Kidney (tissue), 22 donors: ENCODE measurements at regions of chr9 and their contacts with region 1.

Region 1: GRCh38 chr9:70484210-70485130 is 70.0 kb upstream of the KLF9 start:
- DNase-seq: peak in 2 of 5 donors; percentile 51 to 70
- H3K4me3 ChIP-seq: no peak overlapping the region
- H3K27ac ChIP-seq: peak overlapping the region; percentile 63 to 83
- H3K4me1 ChIP-seq: peaks cover 2 to 57% (median 33%) of the 10 kb centered on the region in 3 donors
- H3K27me3 ChIP-seq: no peaks in the 10 kb centered on the region
- CTCF ChIP-seq: peak; percentile 80

Region 2: GRCh38 chr9:70419546-70420266 is 64.8 kb before region 1 on chr9:
- intact Hi-C with region 1: loop called (anchors 5 kb)
- DNase-seq: peak; percentile 88 to 99 (median 91)
- H3K4me3 ChIP-seq: peak overlapping the region; percentile 62 to 73 (median 71)
- H3K27ac ChIP-seq: peak overlapping the region; percentile 98 to 100
- H3K4me1 ChIP-seq: peaks cover 4 to 34% (median 32%) of the 10 kb centered on the region in 3 donors
- H3K27me3 ChIP-seq: no peaks in the 10 kb centered on the region
- CTCF ChIP-seq: no peak

Region 3: GRCh38 chr9:70668751-70669150 is 184.3 kb after region 1 on chr9:
- intact Hi-C with region 1: no loop called
- DNase-seq: no peak
- H3K4me3 ChIP-seq: no peak overlapping the region
- H3K27ac ChIP-seq: no peak overlapping the region
- H3K4me1 ChIP-seq: no peaks in the 10 kb centered on the region
- H3K27me3 ChIP-seq: no peaks in the 10 kb centered on the region
- CTCF ChIP-seq: no peak